Upper lobe of right lung (tissue), 1 donor: ENCODE measurements at regions of chr6 and their contacts with region 1.

Region 1: GRCh38 chr6:154675602-154676088 is 57.6 kb upstream of the SCAF8 start:
- DNase-seq: peak; percentile 79
- ATAC-seq: peak; percentile 100
- H3K4me3 ChIP-seq: no peak overlapping the region
- H3K27ac ChIP-seq: no peak overlapping the region
- H3K4me1 ChIP-seq: no peaks in the 10 kb centered on the region
- H3K27me3 ChIP-seq: no peaks in the 10 kb centered on the region
- CTCF ChIP-seq: peak; percentile 100

Region 2: GRCh38 chr6:154510143-154510905 is 165.3 kb before region 1 on chr6 and contains the start of gene CNKSR3:
- intact Hi-C with region 1: no loop called
- DNase-seq: peak; percentile 92
- ATAC-seq: peak; percentile 90
- H3K4me3 ChIP-seq: peak within 1 kb of the TSS; percentile 76
- H3K27ac ChIP-seq: peak within 1 kb of the TSS; percentile 86
- H3K4me1 ChIP-seq: peaks cover 18% of the 10 kb centered on the region
- H3K27me3 ChIP-seq: no peaks in the 10 kb centered on the region
- CTCF ChIP-seq: no peak
- total RNA-seq, gene CNKSR3: 11.8 TPM

Region 3: GRCh38 chr6:154526996-154527395 is 148.6 kb before region 1 on chr6:
- intact Hi-C with region 1: no loop called
- DNase-seq: no peak
- ATAC-seq: no peak
- H3K4me3 ChIP-seq: no peak overlapping the region
- H3K27ac ChIP-seq: no peak overlapping the region
- H3K4me1 ChIP-seq: no peaks in the 10 kb centered on the region
- H3K27me3 ChIP-seq: no peaks in the 10 kb centered on the region
- CTCF ChIP-seq: no peak

Region 4: GRCh38 chr6:154805288-154805911 is 129.8 kb after region 1 on chr6:
- intact Hi-C with region 1: loop called (anchors 5 kb)
- DNase-seq: no peak
- ATAC-seq: peak; percentile 69
- H3K4me3 ChIP-seq: no peak overlapping the region
- H3K27ac ChIP-seq: no peak overlapping the region
- H3K4me1 ChIP-seq: no peaks in the 10 kb centered on the region
- H3K27me3 ChIP-seq: no peaks in the 10 kb centered on the region
- CTCF ChIP-seq: peak; percentile 53